Activated T-helper 1 cell treated with anti-CD3 and anti-CD28 coated beads, Interleukin-12 subunit alpha, Interleukin-12 subunit beta, Interleukin-2, Interleukin-4 antibody, amounts not matched to agents 30 ng/mL and 10 ng/mL and 1 ng/mL, durations not matched to agents 14 hours and 24 hours and 36 hours (primary cell): ENCODE measurements at regions of chrX and their contacts with region 1.

Region 1: GRCh38 chrX:9285342-9285771 is 179.5 kb upstream of the TBL1X start:
- DNase-seq: peak; percentile 14
- H3K4me3 Mint-ChIP-seq: peak overlapping the region; percentile 37
- H3K27ac Mint-ChIP-seq: peak overlapping the region; percentile 94
- H3K4me1 Mint-ChIP-seq: peaks cover 38% of the 10 kb centered on the region
- H3K27me3 Mint-ChIP-seq: peaks cover 3% of the 10 kb centered on the region

Region 2: GRCh38 chrX:9163214-9163681 is 122.1 kb before region 1 on chrX:
- intact Hi-C with region 1: loop called (anchors 1 kb)
- DNase-seq: no peak
- H3K4me3 Mint-ChIP-seq: no peak overlapping the region
- H3K27ac Mint-ChIP-seq: no peak overlapping the region
- H3K4me1 Mint-ChIP-seq: peaks cover 25% of the 10 kb centered on the region
- H3K27me3 Mint-ChIP-seq: no peaks in the 10 kb centered on the region

Region 3: GRCh38 chrX:9231491-9231890 is 53.9 kb before region 1 on chrX:
- intact Hi-C with region 1: loop called (anchors 1 kb)
- DNase-seq: no peak
- H3K4me3 Mint-ChIP-seq: no peak overlapping the region
- H3K27ac Mint-ChIP-seq: peak overlapping the region; percentile 52
- H3K4me1 Mint-ChIP-seq: peaks cover 14% of the 10 kb centered on the region
- H3K27me3 Mint-ChIP-seq: peaks cover 2% of the 10 kb centered on the region

Region 4: GRCh38 chrX:9258421-9259104 is 26.8 kb before region 1 on chrX:
- intact Hi-C with region 1: loop called (anchors 1 kb)
- DNase-seq: no peak
- H3K4me3 Mint-ChIP-seq: no peak overlapping the region
- H3K27ac Mint-ChIP-seq: peak overlapping the region; percentile 36
- H3K4me1 Mint-ChIP-seq: peaks cover 26% of the 10 kb centered on the region
- H3K27me3 Mint-ChIP-seq: no peaks in the 10 kb centered on the region

Region 5: DNA sequence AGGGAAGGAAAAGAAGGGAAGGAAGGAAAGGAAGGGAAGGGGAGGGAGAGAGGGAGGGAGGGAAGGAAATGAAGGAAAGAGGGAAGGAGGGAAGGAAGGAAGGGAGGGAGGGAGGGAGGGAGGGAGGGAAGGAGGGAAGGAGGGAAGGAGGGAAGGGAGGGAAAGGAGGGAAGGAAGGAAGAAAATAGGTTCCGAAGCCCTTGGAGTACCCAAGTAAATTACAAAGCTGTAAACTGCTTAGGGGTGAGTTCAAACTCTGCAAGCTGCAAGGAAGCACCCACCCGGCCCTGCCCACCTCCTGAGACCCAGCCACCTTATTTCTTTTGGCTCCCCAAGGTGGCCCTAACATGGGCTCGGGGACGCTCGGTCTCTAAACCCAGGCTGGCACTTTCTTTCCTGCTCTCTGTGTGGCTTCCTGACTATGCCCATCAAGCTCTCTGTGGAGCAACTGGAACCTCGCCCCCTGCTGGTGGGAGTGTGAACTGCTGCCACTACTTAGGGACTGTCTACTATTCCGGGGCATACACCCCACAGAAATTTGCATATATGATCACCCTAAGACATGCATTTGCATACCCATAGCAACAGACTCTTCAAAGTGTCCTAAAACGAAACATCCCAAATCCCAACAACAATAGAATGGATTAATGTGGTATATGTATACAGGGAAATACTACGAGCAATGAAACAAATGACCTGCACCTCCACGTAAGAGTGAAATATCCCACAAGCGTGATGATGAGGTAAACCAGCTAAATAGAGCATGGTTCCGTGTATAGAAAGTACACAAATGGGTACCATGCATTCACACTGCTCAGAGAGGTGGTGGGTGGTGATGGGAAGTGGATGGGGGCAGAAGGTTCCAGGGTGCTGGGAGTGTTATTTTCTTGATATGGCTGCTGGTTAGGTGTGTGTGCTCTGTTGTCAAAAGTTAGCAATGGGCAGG is 27.8 kb after region 1 on chrX:
- intact Hi-C with region 1: loop called (anchors 2 kb)
- DNase-seq: peak; percentile 32
- H3K4me3 Mint-ChIP-seq: no peak overlapping the region
- H3K27ac Mint-ChIP-seq: peak overlapping the region; percentile 58
- H3K4me1 Mint-ChIP-seq: peaks cover 11% of the 10 kb centered on the region
- H3K27me3 Mint-ChIP-seq: no peaks in the 10 kb centered on the region

Region 6: DNA sequence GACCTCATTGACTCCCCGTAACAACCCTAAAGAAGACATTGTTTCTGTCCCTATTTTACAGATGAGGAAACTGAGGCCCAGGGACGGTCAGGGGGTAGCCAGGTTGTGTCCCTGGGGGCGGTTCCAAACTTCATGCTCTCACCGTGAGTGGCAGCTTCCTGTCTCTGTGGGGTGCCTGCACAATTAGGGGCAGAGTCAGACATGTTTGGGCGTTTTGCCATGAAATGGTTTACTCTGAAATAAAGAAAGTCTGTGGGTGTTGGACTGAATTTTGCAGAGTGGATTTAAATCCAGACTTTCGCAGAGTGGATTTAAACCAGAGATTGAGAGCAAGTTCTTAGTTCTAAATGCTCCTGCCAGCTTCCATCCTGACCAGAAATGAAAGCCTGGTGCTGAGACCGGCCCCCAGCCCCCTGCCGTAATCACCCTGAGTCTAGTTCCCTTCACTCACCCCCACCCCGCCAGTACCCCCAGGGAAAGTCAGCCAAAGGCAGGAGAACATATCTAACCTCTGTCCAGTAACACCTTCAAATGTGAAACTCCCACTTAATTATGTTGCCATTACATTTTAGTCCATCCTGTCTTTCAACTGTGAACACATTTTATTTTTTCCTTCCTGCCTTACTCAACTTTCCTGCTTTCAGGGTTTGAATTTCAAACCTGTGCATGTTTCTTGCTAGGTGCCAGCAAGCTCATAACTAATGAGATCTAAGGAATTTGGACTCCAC is 135.3 kb after region 1 on chrX:
- intact Hi-C with region 1: no loop called
- DNase-seq: no peak
- H3K4me3 Mint-ChIP-seq: no peak overlapping the region
- H3K27ac Mint-ChIP-seq: no peak overlapping the region
- H3K4me1 Mint-ChIP-seq: no peaks in the 10 kb centered on the region
- H3K27me3 Mint-ChIP-seq: peaks cover 6% of the 10 kb centered on the region

Region 7: GRCh38 chrX:9439004-9439403 is 153.6 kb after region 1 on chrX:
- intact Hi-C with region 1: no loop called
- DNase-seq: no peak
- H3K4me3 Mint-ChIP-seq: no peak overlapping the region
- H3K27ac Mint-ChIP-seq: no peak overlapping the region
- H3K4me1 Mint-ChIP-seq: peaks cover 10% of the 10 kb centered on the region
- H3K27me3 Mint-ChIP-seq: no peaks in the 10 kb centered on the region

Region 8: DNA sequence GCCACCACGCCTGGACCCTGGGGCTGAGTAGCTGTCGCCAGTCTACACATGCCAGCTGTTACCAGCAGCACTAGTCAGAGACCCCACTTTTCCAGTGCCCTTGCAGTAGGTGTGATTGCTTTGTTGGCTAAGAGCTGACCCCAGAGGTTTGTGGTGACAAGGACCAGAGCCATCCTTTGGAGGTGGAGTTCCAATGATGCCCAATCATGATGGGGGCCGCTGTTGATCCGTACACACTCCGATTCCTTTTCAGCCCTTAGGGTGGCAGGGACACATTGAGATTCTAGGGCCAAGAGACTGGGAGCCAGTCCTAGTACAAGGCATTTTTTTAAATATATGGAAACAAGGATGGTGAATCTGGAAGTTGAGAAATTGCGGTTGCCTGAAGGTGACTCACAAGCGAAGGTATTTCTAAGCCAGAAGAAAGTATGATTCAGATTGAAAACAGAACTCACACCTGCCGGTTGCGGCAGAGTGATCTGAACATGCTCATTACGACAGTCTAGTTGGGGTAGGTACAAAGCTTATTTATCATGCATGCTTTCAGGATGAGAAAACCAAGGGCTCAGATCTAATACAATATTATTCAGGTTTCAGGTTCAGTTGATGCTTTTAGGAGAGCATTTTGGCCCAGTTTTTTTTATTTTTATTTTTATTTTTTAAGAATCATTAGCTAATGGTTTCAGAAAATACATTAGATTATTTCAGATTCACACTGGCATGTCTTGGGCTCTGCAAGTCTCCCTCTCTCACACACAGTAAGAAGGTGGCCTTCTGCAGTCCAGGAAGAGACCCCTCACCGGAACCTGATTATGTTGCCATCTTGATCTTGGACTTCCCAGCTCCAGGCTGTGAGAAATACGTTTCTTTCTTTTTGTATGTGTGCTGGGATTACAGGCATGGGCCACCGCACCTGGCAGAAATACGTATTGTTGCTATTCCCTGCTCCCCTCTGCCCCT is 544.2 kb after region 1 on chrX:
- intact Hi-C with region 1: no loop called
- DNase-seq: peak; percentile 1
- H3K4me3 Mint-ChIP-seq: no peak overlapping the region
- H3K27ac Mint-ChIP-seq: peak overlapping the region; percentile 3
- H3K4me1 Mint-ChIP-seq: no peaks in the 10 kb centered on the region
- H3K27me3 Mint-ChIP-seq: peaks cover 10% of the 10 kb centered on the region